Ovary (tissue), 10 donors: ENCODE measurements at regions of chr19 and their contacts with region 1.

Region 1: DNA sequence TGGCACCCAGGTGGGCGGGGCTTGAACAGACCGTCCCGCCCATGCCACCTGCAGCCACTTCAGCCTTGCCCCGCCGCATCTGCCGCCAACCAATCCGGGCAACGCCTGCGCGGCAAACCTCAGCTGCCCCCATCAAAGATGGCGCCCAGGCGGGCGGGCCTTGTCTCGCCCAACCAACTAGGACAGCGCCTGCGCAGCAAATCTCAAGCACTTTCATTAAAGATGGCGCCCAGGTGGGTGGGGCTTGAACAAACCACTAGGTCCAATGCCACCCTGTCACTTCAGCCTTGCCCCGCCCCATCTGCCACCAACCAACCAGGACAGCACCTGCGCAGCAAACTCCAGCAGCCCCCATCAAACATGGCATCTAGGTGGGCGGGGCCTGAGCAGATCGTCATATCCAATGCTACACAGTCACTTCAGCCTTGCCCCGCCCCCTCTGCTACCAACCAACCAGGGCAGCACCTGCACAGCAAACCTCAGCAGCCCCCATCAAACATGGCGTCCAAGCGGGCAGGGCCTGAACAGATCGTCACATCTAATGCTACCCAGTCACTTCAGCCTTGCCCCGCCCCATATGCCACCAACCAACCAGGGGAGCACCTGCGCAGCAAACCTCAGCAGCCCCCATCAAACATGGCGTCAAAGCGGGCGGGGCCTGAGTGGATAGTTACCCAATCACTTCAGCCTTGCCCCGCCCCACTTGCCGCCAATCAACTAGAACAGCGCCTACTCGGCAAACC is 1.4 kb downstream of the PEG3 start:
- DNase-seq: peak; percentile 91 to 99 (median 95)
- H3K4me3 ChIP-seq: peak overlapping the region; percentile 56
- H3K27ac ChIP-seq: peak overlapping the region in 1 of 2 donors; percentile 90
- H3K4me1 ChIP-seq: peaks cover 2% of the 10 kb centered on the region
- H3K27me3 ChIP-seq: no peaks in the 10 kb centered on the region
- CTCF ChIP-seq: no peak
- EP300 ChIP-seq: no peak
- POLR2A ChIP-seq: no peak

Region 2: DNA sequence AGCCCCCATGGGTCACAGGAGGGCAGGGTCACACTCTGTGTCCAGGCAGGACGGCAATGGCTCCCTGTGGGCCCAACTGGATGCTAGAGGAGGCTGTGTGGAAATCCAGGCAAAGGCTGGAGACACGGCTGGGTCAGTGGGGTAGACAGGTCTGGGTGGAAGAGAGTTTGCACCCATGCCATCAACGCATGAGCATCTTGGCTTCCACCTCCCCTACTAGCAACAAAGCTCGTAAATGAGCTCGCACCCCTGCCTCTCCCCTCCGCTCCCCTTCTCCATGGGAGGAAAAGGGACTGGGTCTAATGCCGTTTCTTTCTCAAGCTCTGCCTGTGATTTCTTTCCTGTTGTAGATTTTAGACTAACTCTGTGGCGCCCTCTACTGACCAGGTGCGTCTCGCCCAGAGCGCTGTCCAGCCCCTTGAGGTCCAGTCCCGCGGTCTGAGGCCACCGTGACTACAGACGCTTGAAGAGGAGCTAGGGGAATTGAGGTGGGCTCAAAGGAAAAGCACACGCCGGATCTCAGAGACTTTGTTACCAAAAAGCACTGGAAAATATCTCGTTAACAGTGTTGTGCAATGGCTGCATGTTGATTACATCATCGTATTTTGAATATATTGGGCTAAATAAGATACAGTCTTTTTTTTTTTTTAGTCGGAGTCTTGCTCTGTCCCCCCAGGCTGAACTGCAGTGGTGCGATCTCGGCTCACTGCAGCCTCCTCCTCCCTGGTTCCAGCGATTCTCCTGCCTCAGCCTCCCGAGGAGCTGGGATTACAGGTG is 230.0 kb after region 1 on chr19:
- intact Hi-C with region 1: loop called in 2 of 4 experiments (anchors 10 kb)
- DNase-seq: peak; percentile 86 to 91 (median 88)
- H3K4me3 ChIP-seq: no peak overlapping the region
- H3K27ac ChIP-seq: peak overlapping the region in 1 of 2 donors; percentile 48
- H3K4me1 ChIP-seq: peaks cover 4% of the 10 kb centered on the region
- H3K27me3 ChIP-seq: no peaks in the 10 kb centered on the region
- CTCF ChIP-seq: peak; percentile 53 to 89 (median 83)
- EP300 ChIP-seq: no peak
- POLR2A ChIP-seq: no peak

Region 3: GRCh38 chr19:57075801-57076745 is 237.0 kb after region 1 on chr19:
- intact Hi-C with region 1: loop called in 1 of 4 experiments (anchors 10 kb)
- DNase-seq: no peak
- H3K4me3 ChIP-seq: no peak overlapping the region
- H3K27ac ChIP-seq: no peak overlapping the region
- H3K4me1 ChIP-seq: no peaks in the 10 kb centered on the region
- H3K27me3 ChIP-seq: no peaks in the 10 kb centered on the region
- CTCF ChIP-seq: no peak
- EP300 ChIP-seq: no peak
- POLR2A ChIP-seq: no peak